IMR-90 (cell line): ENCODE measurements at regions of chr5 and their contacts with region 1.

Region 1: DNA sequence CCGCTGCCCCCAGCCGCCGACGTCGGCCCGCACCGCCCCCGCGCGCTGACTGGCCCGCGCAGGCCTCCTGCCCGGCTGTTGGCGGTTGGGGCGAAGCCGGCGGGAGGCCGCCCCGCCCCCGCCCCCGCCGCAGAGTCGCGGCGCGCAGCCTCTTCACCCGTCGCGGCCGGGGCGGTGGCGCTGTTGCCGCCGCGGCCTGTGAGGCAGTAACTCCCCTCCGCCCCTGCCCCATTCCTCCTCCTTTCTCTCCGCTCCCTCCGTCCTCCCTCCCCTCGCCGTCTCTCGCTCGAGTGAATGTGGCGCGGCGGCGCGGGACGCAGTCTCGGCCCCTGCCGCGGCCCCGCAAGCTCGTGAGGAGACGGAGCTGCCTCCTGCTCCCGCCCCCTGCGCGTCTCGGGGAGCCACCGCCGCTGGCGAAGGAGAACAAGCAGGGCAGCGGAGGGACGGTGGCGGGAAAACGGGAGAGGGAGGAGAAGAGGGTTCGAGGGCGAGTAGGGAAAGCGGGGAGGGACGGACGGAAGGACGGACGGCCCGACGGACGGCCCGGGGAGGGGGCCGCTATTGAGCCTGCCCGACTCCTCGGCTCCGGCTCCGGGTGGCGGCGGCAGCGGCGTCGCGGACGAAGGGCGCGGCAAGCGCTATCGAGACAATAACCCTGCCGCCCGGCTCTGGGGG is 637 bp upstream of the ERBIN start:
- DNase-seq: peak; percentile 85
- ATAC-seq: peak; percentile 87
- H3K4me3 ChIP-seq: peak overlapping the region; percentile 75
- H3K27ac ChIP-seq: peak overlapping the region; percentile 100
- H3K4me1 ChIP-seq: no peaks in the 10 kb centered on the region
- H3K27me3 ChIP-seq: no peaks in the 10 kb centered on the region
- CTCF ChIP-seq: peak; percentile 51
- POLR2A ChIP-seq: peak; percentile 86
- RAD21 ChIP-seq: 0 out of 2 replicates have a peak, but pooled peaks have one; percentile 21

Region 2: DNA sequence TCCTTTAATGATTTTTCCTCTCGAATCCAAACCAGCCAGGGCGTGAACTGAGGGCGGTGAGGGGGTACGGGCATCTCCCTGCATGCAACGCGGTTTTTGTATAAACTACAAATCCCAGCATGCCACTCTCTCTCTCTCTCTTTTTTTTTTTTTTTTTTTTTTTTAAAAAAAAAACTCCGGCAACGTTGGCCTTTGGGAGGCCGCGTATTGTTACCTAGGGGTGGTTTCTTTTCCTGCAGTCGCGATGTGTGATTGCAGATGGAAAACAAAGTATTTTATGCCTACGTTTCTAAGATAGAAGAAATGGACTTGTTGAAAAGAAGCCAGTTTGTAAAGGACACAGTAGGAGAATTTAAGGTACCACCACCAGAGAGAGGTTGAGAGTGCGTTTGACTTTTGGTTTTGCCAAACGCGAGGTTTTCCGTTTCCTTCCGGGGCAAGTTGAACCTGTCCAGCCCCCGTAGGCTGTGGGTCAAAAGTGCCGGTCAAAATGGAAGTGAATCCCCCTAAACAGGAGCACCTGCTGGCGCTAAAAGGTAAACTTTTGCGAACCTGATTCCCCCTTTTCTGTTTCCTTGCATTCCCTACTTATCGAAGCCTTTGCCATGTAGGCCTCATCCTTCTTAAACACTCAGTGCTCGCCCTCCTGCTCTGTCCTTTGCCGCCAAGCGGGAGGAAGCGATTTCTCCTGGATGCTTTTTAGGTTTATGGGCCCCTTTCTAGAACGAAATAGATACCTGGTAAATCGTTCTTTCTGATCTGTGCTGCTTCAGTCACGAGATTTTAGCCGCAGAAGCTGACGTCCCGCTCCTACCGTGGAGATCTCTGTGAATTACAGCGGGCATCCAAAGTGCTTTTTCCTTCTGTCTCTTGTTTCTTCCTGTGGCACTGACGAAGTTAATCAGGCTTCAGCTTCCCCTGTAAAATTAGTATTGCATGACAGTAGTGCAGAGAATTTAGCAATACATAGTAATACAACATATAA is 300.9 kb before region 1 on chr5 and contains the starts of genes SHLD3 and TRAPPC13:
- CTCF ChIA-PET with region 1: no interaction called
- POLR2A ChIA-PET with region 1: no interaction called
- dilution Hi-C with region 1: no loop called
- in situ Hi-C with region 1: no loop called
- intact Hi-C with region 1: loop called (anchors 2 kb)
- DNase-seq: peak; percentile 85
- ATAC-seq: peak; percentile 79
- H3K4me3 ChIP-seq: peak within 1 kb of the TSS; percentile 77
- H3K27ac ChIP-seq: peak within 1 kb of the TSS; percentile 85
- H3K4me1 ChIP-seq: no peaks in the 10 kb centered on the region
- H3K27me3 ChIP-seq: no peaks in the 10 kb centered on the region
- CTCF ChIP-seq: no peak
- POLR2A ChIP-seq: peak; percentile 50; the same call in 1 of the 2 replicates
- RAD21 ChIP-seq: no peak
- total RNA-seq, gene SHLD3: 2.5 and 3.9 TPM in 2 replicates
- total RNA-seq, gene TRAPPC13: 17.2 and 26.7 TPM in 2 replicates

Region 3: GRCh38 chr5:65742565-65743231 is 183.0 kb before region 1 on chr5:
- CTCF ChIA-PET with region 1: interaction called, 6 read pairs
- POLR2A ChIA-PET with region 1: no interaction called
- dilution Hi-C with region 1: no loop called
- in situ Hi-C with region 1: no loop called
- intact Hi-C with region 1: loop called (anchors 2 kb)
- DNase-seq: peak; percentile 91
- ATAC-seq: peak; percentile 89
- H3K4me3 ChIP-seq: no peak overlapping the region
- H3K27ac ChIP-seq: peak overlapping the region; percentile 27; the same call in 1 of the 2 replicates
- H3K4me1 ChIP-seq: peaks cover 2% of the 10 kb centered on the region; the same call in 1 of the 2 replicates
- H3K27me3 ChIP-seq: no peaks in the 10 kb centered on the region
- CTCF ChIP-seq: peak; percentile 87
- POLR2A ChIP-seq: no peak
- RAD21 ChIP-seq: peak; percentile 91

Region 4: DNA sequence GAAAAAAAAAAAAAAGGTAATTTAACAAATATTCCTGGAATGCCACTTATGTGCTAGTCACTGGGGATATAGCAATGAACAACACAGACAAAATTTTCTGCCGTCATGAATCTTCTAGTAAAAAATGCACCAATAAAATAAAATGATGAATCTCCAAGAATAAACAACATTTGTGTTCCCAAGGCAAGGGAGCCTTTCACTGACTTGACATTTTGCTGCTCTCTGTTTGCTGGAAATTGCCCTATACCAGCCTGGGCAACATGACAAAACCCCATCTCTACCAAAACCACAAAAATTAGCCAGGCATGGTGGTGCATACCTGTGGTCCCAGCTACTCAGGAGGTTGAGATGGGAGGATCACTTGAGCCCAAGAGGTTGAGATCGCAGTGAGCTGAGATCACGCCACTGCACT is 63.9 kb before region 1 on chr5:
- CTCF ChIA-PET with region 1: no interaction called
- POLR2A ChIA-PET with region 1: no interaction called
- dilution Hi-C with region 1: no loop called
- in situ Hi-C with region 1: no loop called
- intact Hi-C with region 1: loop called (anchors 2 kb)
- DNase-seq: peak; percentile 92
- ATAC-seq: peak; percentile 96
- H3K4me3 ChIP-seq: no peak overlapping the region
- H3K27ac ChIP-seq: peak overlapping the region; percentile 74; the same call in 1 of the 2 replicates
- H3K4me1 ChIP-seq: peaks cover 10% of the 10 kb centered on the region
- H3K27me3 ChIP-seq: no peaks in the 10 kb centered on the region
- CTCF ChIP-seq: no peak
- POLR2A ChIP-seq: no peak
- RAD21 ChIP-seq: no peak

Region 5: DNA sequence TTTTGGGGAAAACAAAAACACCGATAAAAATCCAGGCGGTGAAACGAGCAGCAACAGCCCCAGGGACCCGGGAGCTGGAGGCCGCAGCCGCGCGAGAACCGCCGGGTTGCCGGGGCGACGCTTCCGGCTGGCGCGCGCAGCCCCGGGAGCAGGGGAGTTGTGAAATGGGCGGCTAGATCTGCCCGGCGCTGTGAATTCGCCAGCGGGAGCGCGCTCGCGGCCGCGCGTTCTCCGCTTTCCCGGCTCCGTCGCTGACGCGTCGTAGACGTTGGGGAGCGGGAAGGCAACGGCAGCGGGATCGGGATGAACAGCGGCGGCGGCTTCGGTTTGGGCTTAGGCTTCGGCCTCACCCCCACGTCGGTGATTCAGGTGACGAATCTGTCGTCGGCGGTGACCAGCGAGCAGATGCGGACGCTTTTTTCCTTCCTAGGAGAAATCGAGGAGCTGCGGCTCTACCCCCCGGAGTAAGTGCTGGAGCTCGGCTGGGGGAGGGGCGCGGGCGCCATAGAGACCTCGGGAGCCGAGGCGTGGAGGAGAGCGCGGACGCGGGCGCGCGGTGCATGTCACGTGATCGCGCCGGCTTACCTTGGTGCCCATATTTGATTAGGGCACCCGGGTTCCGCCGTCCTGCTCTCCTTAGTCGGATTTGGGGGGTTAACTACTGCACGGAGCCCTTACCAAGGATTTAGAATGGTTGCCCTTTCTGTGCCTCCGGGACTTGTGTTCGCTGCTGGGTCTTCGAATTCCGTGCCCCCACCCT is 218.5 kb after region 1 on chr5 and contains the start of gene SREK1:
- CTCF ChIA-PET with region 1: no interaction called
- POLR2A ChIA-PET with region 1: no interaction called
- dilution Hi-C with region 1: no loop called
- in situ Hi-C with region 1: no loop called
- intact Hi-C with region 1: loop called (anchors 2 kb)
- DNase-seq: peak; percentile 92
- ATAC-seq: peak; percentile 91
- H3K4me3 ChIP-seq: peak within 1 kb of the TSS; percentile 93
- H3K27ac ChIP-seq: peak within 1 kb of the TSS; percentile 79
- H3K4me1 ChIP-seq: no peaks in the 10 kb centered on the region; the same call in 1 of the 2 replicates
- H3K27me3 ChIP-seq: no peaks in the 10 kb centered on the region
- CTCF ChIP-seq: no peak
- POLR2A ChIP-seq: peak; percentile 94
- RAD21 ChIP-seq: no peak
- total RNA-seq, gene SREK1: 36.2 and 80.0 TPM in 2 replicates